ENCODE measurements at regions of chr14 and their contacts with region 1.

Region 1: GRCh38 chr14:35808076-35808652 is 931 bp downstream of the RALGAPA1 start:
- DNase-seq: peak; percentile 61
- H3K4me3 Mint-ChIP-seq: peak overlapping the region; percentile 98
- H3K27ac Mint-ChIP-seq: peak overlapping the region; percentile 86
- H3K4me1 Mint-ChIP-seq: peaks cover 28% of the 10 kb centered on the region
- H3K27me3 Mint-ChIP-seq: no peaks in the 10 kb centered on the region

Region 2: DNA sequence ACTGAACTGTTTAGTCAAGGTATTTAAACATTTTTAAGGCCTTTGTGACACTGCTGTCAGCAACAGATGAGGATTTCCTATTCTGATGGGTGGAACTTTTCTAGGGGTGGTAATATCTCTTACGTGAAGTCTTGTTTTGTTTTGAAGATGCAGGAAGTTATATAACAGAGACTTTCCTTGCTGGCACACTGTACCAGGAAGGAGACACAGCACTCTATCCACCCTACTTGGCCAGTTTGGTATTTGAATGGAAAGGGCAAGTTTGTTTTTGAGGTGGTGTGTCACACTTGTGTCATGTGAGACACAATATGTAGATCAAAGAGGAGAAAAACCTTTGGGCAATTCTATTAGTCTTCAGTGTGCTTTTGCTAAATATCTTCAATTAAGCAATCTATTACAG is 877.0 kb before region 1 on chr14:
- CTCF ChIA-PET with region 1: no interaction called
- intact Hi-C with region 1: loop called (anchors 1 kb)
- DNase-seq: peak; percentile 56
- H3K4me3 Mint-ChIP-seq: peak overlapping the region; percentile 64
- H3K27ac Mint-ChIP-seq: peak overlapping the region; percentile 93
- H3K4me1 Mint-ChIP-seq: peaks cover 49% of the 10 kb centered on the region
- H3K27me3 Mint-ChIP-seq: no peaks in the 10 kb centered on the region

Region 3: GRCh38 chr14:35533357-35534207 is 274.6 kb before region 1 on chr14 and contains the start of gene INSM2:
- CTCF ChIA-PET with region 1: no interaction called
- intact Hi-C with region 1: loop called (anchors 2 kb)
- DNase-seq: peak; percentile 61
- H3K4me3 Mint-ChIP-seq: peak within 1 kb of the TSS; percentile 73
- H3K27ac Mint-ChIP-seq: no peak within 1 kb of the TSS
- H3K4me1 Mint-ChIP-seq: peaks cover 10% of the 10 kb centered on the region
- H3K27me3 Mint-ChIP-seq: peaks cover 61% of the 10 kb centered on the region
- total RNA-seq, gene INSM2: not detected

Region 4: GRCh38 chr14:35708073-35708472 is 100.1 kb before region 1 on chr14:
- CTCF ChIA-PET with region 1: no interaction called
- intact Hi-C with region 1: loop called (anchors 5 kb)
- DNase-seq: no peak
- H3K4me3 Mint-ChIP-seq: no peak overlapping the region
- H3K27ac Mint-ChIP-seq: no peak overlapping the region
- H3K4me1 Mint-ChIP-seq: peaks cover 6% of the 10 kb centered on the region
- H3K27me3 Mint-ChIP-seq: no peaks in the 10 kb centered on the region

Region 5: DNA sequence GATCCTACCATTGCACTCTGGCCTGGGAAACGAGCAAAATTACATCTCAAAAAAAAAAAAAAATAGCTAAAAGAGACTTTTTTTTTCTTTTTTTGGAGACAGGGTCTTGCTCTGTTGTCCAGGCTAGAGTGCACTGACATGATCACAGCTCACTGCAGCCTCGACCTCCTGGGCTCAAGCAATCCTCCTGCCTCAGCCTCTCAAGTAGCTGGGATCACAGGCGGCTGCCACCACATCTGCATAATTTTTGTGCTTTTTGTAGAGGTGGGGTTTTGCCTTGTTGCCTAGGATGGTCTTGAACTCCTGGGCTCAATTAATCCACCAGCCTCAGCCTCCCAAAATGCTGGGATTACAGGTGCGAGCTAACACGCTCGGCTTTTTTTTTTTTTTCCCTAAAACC is 10.4 kb before region 1 on chr14:
- CTCF ChIA-PET with region 1: no interaction called
- intact Hi-C with region 1: loop called (anchors 1 kb)
- DNase-seq: no peak
- H3K4me3 Mint-ChIP-seq: no peak overlapping the region
- H3K27ac Mint-ChIP-seq: no peak overlapping the region
- H3K4me1 Mint-ChIP-seq: peaks cover 36% of the 10 kb centered on the region
- H3K27me3 Mint-ChIP-seq: no peaks in the 10 kb centered on the region

Measured in activated naive CD4-positive, alpha-beta T cell treated with anti-CD3 and anti-CD28 coated beads for 36 hours (primary cell).